Colonic mucosa (tissue), 4 donors: ENCODE measurements at regions of chr19 and their contacts with region 1.

Region 1: GRCh38 chr19:7799640-7800355 is 30.2 kb upstream of the EVI5L start:
- DNase-seq: peak; percentile 81
- H3K4me3 ChIP-seq: no peak overlapping the region
- H3K27ac ChIP-seq: no peak overlapping the region
- H3K4me1 ChIP-seq: no peaks in the 10 kb centered on the region
- H3K27me3 ChIP-seq: no peaks in the 10 kb centered on the region
- CTCF ChIP-seq: peak; percentile 62

Region 2: DNA sequence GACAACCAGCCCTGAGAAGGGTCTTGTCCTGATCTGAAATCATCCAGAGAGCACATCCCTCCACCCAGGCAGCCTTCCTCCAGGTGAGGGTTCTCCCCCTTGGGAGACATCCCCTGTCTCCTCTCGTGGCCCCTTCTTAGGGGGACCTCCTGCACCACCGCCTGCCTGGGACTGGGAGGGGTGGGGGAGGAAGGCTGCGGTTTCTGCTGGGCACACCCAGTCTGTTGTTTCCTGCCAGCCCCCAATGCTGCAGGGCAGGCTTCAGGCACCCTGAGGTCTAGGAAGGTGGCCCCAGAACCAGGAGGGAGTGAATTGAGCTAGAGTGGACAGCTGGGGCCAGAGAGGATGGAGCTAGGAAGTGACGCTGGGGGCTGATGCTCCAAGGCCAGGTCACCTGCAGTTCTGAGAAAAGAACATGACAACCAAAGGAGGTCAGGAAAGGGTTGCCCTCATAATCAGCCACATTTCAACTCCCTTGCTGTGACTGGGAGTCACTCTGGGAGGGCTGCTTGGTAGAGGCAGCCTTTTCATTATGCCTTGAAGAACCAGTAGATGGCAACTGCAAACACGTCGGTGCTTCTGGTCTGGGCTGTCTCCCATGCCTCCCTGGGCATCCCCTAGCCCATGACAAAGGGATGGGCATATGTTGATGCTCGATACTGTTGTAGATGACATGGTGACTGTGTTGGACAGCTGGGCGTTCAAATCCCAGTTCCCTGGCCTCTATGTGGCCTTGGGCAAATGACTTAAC is 449.7 kb before region 1 on chr19:
- intact Hi-C with region 1: loop called (anchors 5 kb)
- DNase-seq: no peak
- H3K4me3 ChIP-seq: no peak overlapping the region
- H3K27ac ChIP-seq: no peak overlapping the region
- H3K4me1 ChIP-seq: no peaks in the 10 kb centered on the region
- H3K27me3 ChIP-seq: no peaks in the 10 kb centered on the region
- CTCF ChIP-seq: no peak

Region 3: GRCh38 chr19:7562646-7563393 is 237.0 kb before region 1 on chr19:
- intact Hi-C with region 1: loop called (anchors 2 kb)
- DNase-seq: no peak
- H3K4me3 ChIP-seq: no peak overlapping the region
- H3K27ac ChIP-seq: no peak overlapping the region
- H3K4me1 ChIP-seq: no peaks in the 10 kb centered on the region
- H3K27me3 ChIP-seq: no peaks in the 10 kb centered on the region
- CTCF ChIP-seq: no peak

Region 4: DNA sequence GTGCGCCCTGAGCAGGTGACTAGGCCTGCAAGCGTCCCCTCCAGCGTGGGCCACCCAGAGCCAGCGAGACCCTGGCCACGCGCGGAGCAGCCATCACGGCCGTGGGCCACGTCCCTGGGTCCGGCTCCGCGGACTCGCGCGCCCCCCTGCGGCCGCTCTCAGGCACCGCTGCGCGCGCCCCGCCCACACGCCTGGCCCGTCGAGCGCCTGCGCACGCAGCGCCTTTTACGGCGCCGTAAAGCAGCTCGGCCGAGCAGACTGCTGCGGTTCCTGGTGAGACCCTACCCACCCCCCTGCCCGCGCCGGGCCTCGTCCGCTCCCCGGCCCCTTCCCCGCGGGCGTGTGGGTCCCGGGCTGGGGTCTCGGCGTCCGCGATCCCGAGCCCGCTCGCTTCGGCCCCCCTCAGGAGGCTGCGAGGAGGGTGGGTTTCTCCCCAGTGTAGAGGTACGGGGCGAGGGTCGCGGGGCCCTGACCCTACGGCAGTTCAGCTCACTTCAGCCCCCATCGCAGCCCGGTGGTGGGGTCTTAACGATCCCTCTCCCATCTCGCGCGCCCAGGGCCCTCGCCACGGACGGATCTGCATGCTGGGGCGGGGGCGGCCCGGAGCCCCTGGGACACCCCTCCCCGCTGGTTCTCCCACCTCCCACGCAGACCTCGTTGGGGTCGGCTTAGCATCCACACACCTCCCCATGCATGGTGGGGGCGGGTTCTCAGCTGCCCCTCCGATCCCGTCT is 119.0 kb before region 1 on chr19 and contains the start of gene TRAPPC5:
- intact Hi-C with region 1: loop called (anchors 2 kb)
- DNase-seq: peak; percentile 87
- H3K4me3 ChIP-seq: peak within 1 kb of the TSS; percentile 83
- H3K27ac ChIP-seq: peak within 1 kb of the TSS; percentile 82
- H3K4me1 ChIP-seq: no peaks in the 10 kb centered on the region
- H3K27me3 ChIP-seq: no peaks in the 10 kb centered on the region
- CTCF ChIP-seq: peak; percentile 95
- total RNA-seq, gene TRAPPC5: 107 to 139 TPM